ENCODE measurements at regions of chr2 and their contacts with region 1.

Region 1: GRCh38 chr2:178128836-178129630 is 16.8 kb downstream of the RBM45 start:
- DNase-seq: no peak
- ATAC-seq: no peak
- H3K4me3 ChIP-seq: no peak overlapping the region
- H3K27ac ChIP-seq: no peak overlapping the region
- H3K4me1 ChIP-seq: 0 out of 5 replicates have a peak, but pooled peaks cover 0 to 2% of the 10 kb centered on the region in 2 experiments
- H3K27me3 ChIP-seq: no peaks in the 10 kb centered on the region
- CTCF ChIP-seq: no peak
- EP300 ChIP-seq: no peak
- POLR2A ChIP-seq: no peak
- RAD21 ChIP-seq: no peak

Region 2: GRCh38 chr2:177909962-177910361 is 219.1 kb before region 1 on chr2:
- CTCF ChIA-PET with region 1: no interaction called
- POLR2A ChIA-PET with region 1: no interaction called
- in situ Hi-C with region 1: no loop called
- intact Hi-C with region 1: no loop called
- DNase-seq: no peak
- ATAC-seq: no peak
- H3K4me3 ChIP-seq: no peak overlapping the region
- H3K27ac ChIP-seq: no peak overlapping the region
- H3K4me1 ChIP-seq: no peaks in the 10 kb centered on the region; a peak in 1 of 5 replicates
- H3K27me3 ChIP-seq: no peaks in the 10 kb centered on the region; a peak in 1 of 5 replicates
- CTCF ChIP-seq: no peak
- EP300 ChIP-seq: no peak
- POLR2A ChIP-seq: no peak
- RAD21 ChIP-seq: no peak

Region 3: GRCh38 chr2:178208817-178209216 is 79.8 kb after region 1 on chr2:
- CTCF ChIA-PET with region 1: interaction called, 8 read pairs
- POLR2A ChIA-PET with region 1: no interaction called
- in situ Hi-C with region 1: no loop called
- intact Hi-C with region 1: loop called (anchors 2 kb)
- DNase-seq: peak in 1 of 4 experiments; percentile 26
- ATAC-seq: no peak
- H3K4me3 ChIP-seq: no peak overlapping the region
- H3K27ac ChIP-seq: no peak overlapping the region
- H3K4me1 ChIP-seq: peaks cover 3 to 12% of the 10 kb centered on the region in 2 experiments; a peak in 3 of 5 replicates
- H3K27me3 ChIP-seq: no peaks in the 10 kb centered on the region; a peak in 1 of 5 replicates
- CTCF ChIP-seq: peak in 2 of 3 experiments; percentile 43 to 59; a peak in 4 of 6 replicates
- EP300 ChIP-seq: no peak
- POLR2A ChIP-seq: no peak
- RAD21 ChIP-seq: peak in 1 of 2 experiments; percentile 60; a peak in 3 of 4 replicates

Region 4: GRCh38 chr2:178280244-178280852 is 151.3 kb after region 1 on chr2:
- CTCF ChIA-PET with region 1: interaction called, 3 read pairs
- POLR2A ChIA-PET with region 1: no interaction called
- in situ Hi-C with region 1: no loop called
- intact Hi-C with region 1: loop called (anchors 2 kb)
- DNase-seq: peak; percentile 62 to 73 (median 70)
- ATAC-seq: peak; percentile 55
- H3K4me3 ChIP-seq: no peak overlapping the region
- H3K27ac ChIP-seq: no peak overlapping the region
- H3K4me1 ChIP-seq: peaks cover 9 to 48% of the 10 kb centered on the region in 2 experiments
- H3K27me3 ChIP-seq: no peaks in the 10 kb centered on the region
- CTCF ChIP-seq: peak; percentile 55 to 74 (median 64); a peak in 5 of 6 replicates
- EP300 ChIP-seq: no peak
- POLR2A ChIP-seq: no peak
- RAD21 ChIP-seq: peak; percentile 26 to 74; a peak in 2 of 4 replicates

Measured in K562 (cell line).